A673 (cell line): ENCODE measurements at regions of chr7 and their contacts with region 1.

Region 1: GRCh38 chr7:104923010-104923421 is 91.0 kb upstream of the KMT2E start:
- DNase-seq: peak; percentile 91
- H3K4me3 ChIP-seq: no peak overlapping the region
- H3K27ac ChIP-seq: peak overlapping the region; percentile 12
- H3K4me1 ChIP-seq: peaks cover 10% of the 10 kb centered on the region
- H3K27me3 ChIP-seq: no peaks in the 10 kb centered on the region
- CTCF ChIP-seq: peak; percentile 86

Region 2: GRCh38 chr7:104643587-104644217 is 279.3 kb before region 1 on chr7:
- CTCF ChIA-PET with region 1: interaction called, 6 read pairs
- POLR2A ChIA-PET with region 1: no interaction called
- intact Hi-C with region 1: loop called (anchors 5 kb)
- DNase-seq: peak; percentile 49
- H3K4me3 ChIP-seq: no peak overlapping the region
- H3K27ac ChIP-seq: no peak overlapping the region
- H3K4me1 ChIP-seq: no peaks in the 10 kb centered on the region
- H3K27me3 ChIP-seq: peaks cover 58% of the 10 kb centered on the region
- CTCF ChIP-seq: peak; percentile 73

Region 3: GRCh38 chr7:104983578-104984539 is 60.8 kb after region 1 on chr7:
- CTCF ChIA-PET with region 1: interaction called, 6 read pairs
- POLR2A ChIA-PET with region 1: no interaction called
- intact Hi-C with region 1: loop called (anchors 1 kb)
- DNase-seq: peak; percentile 92
- H3K4me3 ChIP-seq: peak overlapping the region; percentile 60
- H3K27ac ChIP-seq: peak overlapping the region; percentile 97
- H3K4me1 ChIP-seq: peaks cover 77% of the 10 kb centered on the region
- H3K27me3 ChIP-seq: no peaks in the 10 kb centered on the region
- CTCF ChIP-seq: peak; percentile 36; the same call in 1 of the 2 replicates

Region 4: GRCh38 chr7:105487579-105488571 is 564.9 kb after region 1 on chr7:
- CTCF ChIA-PET with region 1: no interaction called
- POLR2A ChIA-PET with region 1: no interaction called
- intact Hi-C with region 1: loop called (anchors 5 kb)
- DNase-seq: peak; percentile 55
- H3K4me3 ChIP-seq: no peak overlapping the region
- H3K27ac ChIP-seq: no peak overlapping the region
- H3K4me1 ChIP-seq: peaks cover 3% of the 10 kb centered on the region
- H3K27me3 ChIP-seq: no peaks in the 10 kb centered on the region
- CTCF ChIP-seq: peak; percentile 59

Region 5: DNA sequence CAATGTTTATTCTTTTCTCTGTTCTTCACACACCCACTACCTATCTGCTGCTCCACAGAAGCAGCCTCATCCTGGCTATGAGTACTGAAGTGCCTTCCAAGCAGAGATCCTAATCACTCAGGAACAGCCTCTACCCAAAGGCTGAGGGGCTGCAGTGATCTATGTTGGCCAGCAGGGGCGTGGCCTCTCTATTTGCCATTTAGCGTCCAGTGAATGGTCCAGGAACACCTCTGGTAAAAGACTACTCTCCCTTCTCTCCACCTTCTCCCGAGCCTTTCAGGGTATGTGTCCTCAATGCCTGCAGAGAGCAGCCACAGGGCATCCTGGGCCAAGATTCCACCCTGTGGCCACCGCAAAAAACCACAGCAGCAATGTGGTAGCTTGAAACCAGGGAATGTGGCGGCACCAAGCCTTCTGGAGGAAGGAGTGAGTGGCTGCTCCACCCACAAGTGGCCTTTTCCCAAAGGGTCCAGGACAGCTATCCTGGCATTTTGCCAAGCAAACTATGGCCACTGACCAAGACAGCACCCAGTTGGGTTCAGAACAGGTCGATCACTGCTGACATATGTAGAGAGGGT is 1118.2 kb after region 1 on chr7:
- CTCF ChIA-PET with region 1: no interaction called
- POLR2A ChIA-PET with region 1: no interaction called
- intact Hi-C with region 1: loop called (anchors 2 kb)
- DNase-seq: peak; percentile 71
- H3K4me3 ChIP-seq: no peak overlapping the region
- H3K27ac ChIP-seq: no peak overlapping the region
- H3K4me1 ChIP-seq: peaks cover 34% of the 10 kb centered on the region
- H3K27me3 ChIP-seq: no peaks in the 10 kb centered on the region
- CTCF ChIP-seq: peak; percentile 80